Ovary (tissue), 10 donors: ENCODE measurements at regions of chr4 and their contacts with region 1.

Region 1: DNA sequence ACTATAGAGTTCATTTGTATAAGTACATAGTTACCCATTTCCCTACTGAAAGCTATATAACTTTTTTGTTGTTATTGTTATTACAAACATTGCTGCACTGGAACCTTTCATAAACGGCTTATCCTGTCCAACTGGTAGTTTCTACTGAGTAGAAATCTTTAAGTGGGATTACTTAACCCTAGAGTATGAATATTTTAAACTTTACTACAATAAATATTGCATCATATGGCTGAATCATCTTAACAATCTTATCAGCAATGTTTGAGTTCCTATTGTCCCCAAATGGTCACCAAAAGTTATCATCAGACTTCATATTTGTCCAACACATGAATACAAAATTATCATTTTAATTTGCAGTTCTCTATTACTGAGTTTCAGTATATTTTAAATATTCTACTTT is 40.5 kb downstream of the LCORL start:
- DNase-seq: no peak
- H3K4me3 ChIP-seq: no peak overlapping the region
- H3K27ac ChIP-seq: no peak overlapping the region
- H3K4me1 ChIP-seq: no peaks in the 10 kb centered on the region
- H3K27me3 ChIP-seq: no peaks in the 10 kb centered on the region
- CTCF ChIP-seq: no peak
- EP300 ChIP-seq: no peak
- POLR2A ChIP-seq: no peak

Region 2: DNA sequence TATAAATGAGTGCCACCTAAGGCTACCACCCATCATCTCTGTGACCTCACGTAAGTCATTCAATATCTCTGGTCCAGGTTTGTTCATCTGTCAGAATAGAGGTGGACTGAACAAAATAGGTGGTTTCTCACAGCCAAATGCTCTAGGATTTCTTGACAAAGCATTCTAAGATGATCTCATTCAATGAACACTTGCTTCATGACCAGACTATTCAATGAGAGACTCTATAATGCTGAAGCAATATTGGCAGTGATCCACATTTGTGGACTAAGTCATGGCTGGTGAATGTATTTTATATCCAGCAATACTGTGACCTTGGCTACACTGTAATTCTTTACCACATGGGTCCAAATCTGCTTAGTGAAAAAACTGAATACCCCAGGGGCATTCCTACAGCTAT is 1120.5 kb before region 1 on chr4:
- intact Hi-C with region 1: loop called in 1 of 4 experiments (anchors 5 kb)
- DNase-seq: no peak
- H3K4me3 ChIP-seq: no peak overlapping the region
- H3K27ac ChIP-seq: no peak overlapping the region
- H3K4me1 ChIP-seq: no peaks in the 10 kb centered on the region
- H3K27me3 ChIP-seq: no peaks in the 10 kb centered on the region
- CTCF ChIP-seq: no peak
- EP300 ChIP-seq: no peak
- POLR2A ChIP-seq: no peak